Aorta (tissue), 5 donors: ENCODE measurements at regions of chr15 and their contacts with region 1.

Region 1: DNA sequence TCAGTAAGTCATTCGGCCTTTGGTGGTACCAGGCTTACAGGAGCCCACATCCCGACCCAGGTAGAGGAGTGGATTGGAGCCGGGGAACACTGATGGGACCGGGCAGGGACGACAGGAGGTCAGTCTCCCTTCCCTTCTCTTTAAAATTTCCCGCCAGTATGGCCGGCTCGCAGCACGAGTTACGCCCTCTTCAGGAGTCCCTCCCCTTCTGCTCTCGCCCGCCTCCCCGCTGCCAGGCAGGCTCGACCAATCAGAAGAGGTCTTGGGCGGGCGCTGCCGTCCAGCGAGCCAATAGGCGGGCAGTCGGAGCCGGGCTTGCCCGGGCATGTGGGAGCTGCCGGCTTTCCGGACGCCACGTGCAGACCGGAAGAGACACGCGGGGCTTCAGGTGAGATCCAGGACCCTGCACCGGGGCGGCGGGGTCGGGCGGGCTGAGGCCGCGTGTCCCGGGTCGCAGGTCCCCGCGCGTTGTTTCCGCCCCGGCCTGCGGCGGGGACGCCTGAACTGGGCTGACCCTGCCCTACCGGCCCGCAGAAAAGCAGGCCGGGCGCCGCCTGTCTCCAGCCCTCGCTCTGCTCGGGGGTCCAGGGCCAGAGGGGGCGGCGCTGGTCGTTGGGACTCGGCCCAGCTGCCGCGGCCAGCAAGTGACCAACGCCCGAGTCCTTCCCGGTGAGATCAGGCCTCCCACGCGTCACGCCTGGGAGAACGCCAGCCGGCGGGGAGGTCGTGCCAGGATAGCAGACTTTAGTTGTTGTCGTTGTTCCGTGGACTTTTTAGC is at the start of gene AEN:
- DNase-seq: peak; percentile 98
- ATAC-seq: peak; percentile 98
- H3K4me3 ChIP-seq: peak within 1 kb of the TSS; percentile 56 to 89
- H3K27ac ChIP-seq: peak within 1 kb of the TSS; percentile 66 to 73
- H3K4me1 ChIP-seq: peaks cover 0 to 2% of the 10 kb centered on the region in 2 donors
- H3K27me3 ChIP-seq: no peaks in the 10 kb centered on the region
- total RNA-seq, gene AEN: 10.7 to 22.3 TPM

Region 2: DNA sequence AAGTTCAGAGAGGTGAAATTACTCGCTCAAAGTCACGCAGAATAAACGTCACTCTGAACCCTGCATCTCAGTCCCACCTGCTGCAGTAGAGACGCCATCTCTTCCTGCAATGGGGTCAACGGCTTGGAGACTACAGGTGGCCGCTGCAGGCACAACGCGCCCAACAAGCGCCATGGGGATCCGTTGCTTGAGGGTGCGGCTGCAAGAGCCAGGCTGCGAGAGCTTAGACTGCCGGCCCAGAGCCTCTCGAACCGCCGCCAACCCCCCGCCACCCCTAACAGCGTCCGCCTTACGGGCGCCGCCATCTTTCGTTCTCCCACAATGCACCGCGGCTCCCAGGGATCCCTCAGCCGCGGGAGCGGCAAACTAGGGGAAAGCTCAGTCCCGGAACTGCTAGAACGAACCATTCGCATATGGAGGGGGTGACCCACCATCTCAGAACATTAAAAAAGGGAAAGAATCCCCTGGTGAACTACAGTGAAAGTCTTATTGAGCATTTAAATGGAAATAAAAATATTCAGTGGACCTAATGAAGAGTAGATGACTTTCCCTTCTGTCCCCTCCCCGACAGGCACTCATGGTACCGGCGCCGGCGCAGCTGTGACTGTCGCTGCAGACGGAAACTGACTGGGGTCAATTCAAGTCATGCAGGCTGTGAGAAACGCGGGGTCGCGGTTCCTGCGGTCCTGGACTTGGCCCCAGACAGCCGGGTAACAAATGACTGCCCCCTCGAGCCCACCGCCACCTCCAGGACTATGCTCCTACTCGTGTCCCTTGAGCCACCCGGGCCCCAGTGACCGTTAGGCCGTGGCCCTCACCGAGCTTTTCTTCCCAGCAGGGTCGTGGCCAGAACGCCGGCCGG is 153.9 kb before region 1 on chr15 and contains the starts of genes MRPL46 and MRPS11:
- intact Hi-C with region 1: loop called in 1 of 2 experiments (anchors 5 kb)
- DNase-seq: peak; percentile 92 to 97
- ATAC-seq: peak; percentile 98
- H3K4me3 ChIP-seq: peak within 1 kb of the TSS; percentile 73 to 81
- H3K27ac ChIP-seq: peak within 1 kb of the TSS in 1 of 2 donors; percentile 42
- H3K4me1 ChIP-seq: peaks cover 0 to 5% of the 10 kb centered on the region in 2 donors
- H3K27me3 ChIP-seq: no peaks in the 10 kb centered on the region
- total RNA-seq, gene MRPL46: 14.1 to 16.5 TPM
- total RNA-seq, gene MRPS11: 24.9 to 32.2 TPM

Region 3: GRCh38 chr15:88638626-88639372 is 17.6 kb after region 1 on chr15 and contains the start of gene ISG20:
- intact Hi-C with region 1: no loop called
- DNase-seq: peak; percentile 95 to 96
- ATAC-seq: peak; percentile 95
- H3K4me3 ChIP-seq: peak within 1 kb of the TSS; percentile 1 to 3
- H3K27ac ChIP-seq: peak within 1 kb of the TSS; percentile 46 to 98
- H3K4me1 ChIP-seq: peaks cover 0 to 2% of the 10 kb centered on the region in 2 donors
- H3K27me3 ChIP-seq: no peaks in the 10 kb centered on the region
- total RNA-seq, gene ISG20: 12.4 to 13.3 TPM

Region 4: DNA sequence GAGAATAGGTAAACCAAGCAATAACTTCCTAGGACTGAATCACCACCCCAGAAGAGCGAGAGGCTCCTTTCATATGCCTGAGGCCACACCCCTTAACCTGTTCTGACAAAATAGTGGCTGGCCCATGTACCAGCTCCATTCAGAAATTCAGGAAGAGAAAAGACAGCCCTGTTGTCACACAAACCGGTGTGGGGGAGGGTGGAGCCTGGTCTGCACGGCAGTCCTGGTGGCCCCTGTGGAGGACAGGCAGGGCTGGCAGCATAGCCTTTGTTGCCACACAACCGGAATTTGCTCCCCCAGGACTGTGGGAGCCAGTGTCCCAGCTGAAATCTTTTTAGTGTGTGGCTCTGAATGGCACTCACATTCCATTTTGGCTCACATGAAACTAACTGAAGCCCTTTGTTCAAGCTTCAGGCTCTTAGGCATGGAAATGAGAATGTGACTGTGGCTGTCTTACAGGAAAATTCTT is 576.4 kb after region 1 on chr15:
- intact Hi-C with region 1: loop called in 1 of 2 experiments (anchors 10 kb)
- DNase-seq: no peak
- ATAC-seq: no peak
- H3K4me3 ChIP-seq: no peak overlapping the region
- H3K27ac ChIP-seq: peak overlapping the region in 1 of 2 donors; percentile 30
- H3K4me1 ChIP-seq: no peaks in the 10 kb centered on the region
- H3K27me3 ChIP-seq: no peaks in the 10 kb centered on the region